ENCODE measurements at regions of chr1 and their contacts with region 1.

Region 1: DNA sequence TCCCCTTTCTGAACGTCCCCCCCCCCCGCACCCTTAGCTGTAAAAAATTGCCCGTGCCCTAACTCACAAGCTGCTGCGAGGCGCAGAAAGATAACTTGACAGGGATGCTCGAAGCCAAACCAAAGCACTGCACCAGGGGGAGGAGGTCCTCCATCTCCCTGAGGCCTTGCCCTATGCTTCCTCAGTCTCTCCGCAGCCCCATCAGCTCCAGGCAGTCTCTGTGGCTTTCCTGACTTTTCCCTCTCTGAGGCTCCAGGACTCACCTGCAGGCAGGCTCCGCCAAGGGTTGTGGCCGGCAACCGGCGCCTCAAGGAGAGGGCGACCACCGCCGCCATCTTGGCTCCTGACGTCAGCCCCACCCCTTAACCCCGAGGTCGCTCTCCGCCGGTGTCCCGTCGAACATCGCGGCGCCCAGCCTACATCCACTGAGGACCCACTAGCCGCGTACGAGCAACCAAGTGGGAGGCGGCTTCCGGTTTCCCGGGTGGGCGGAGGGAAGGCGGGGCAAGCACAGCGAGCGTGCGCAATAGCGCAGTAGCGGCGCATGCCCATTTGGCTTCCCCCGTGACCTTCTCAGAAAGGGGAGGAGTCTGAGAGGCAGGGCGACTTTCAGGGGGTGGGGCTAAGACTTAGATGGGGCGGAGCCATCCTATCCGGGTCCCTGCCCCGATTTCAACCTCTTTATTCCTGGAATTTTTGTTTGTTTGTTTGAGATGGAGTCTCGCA is at the start of gene SDHB:
- DNase-seq: peak; percentile 100
- H3K4me3 Mint-ChIP-seq: peak within 1 kb of the TSS; percentile 99
- H3K27ac Mint-ChIP-seq: peak within 1 kb of the TSS; percentile 98
- H3K4me1 Mint-ChIP-seq: peaks cover 16% of the 10 kb centered on the region
- H3K27me3 Mint-ChIP-seq: peaks cover 6% of the 10 kb centered on the region
- total RNA-seq, gene SDHB: 140 and 156 TPM in 2 replicates

Region 2: DNA sequence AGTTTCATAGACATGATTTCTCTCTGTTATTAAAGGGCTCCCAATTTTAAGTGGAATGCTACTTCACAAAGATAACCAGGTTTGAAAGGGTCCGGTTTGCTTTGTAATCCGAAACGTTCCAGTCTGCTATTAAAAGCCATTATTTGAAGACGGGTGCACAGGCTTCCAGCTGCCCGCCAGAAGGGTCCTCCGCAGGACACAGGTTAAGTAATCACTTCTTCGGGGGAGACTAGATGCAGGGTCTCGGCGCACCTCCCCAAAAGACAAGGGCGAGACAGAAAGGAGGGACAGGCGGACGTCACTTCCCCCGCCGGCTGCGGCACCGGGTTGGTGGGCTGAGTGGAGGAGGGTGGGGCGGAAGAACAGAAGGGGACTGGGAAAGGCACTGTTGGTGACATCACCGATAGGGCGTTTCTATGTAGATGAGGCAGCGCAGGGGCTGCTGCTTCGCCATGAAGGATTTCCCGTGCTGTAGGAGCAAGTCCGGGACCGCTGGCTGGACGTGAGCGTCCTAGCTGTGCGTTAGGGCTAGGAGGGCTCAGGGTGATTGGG is 149.2 kb before region 1 on chr1:
- intact Hi-C with region 1: loop called (anchors 2 kb)
- DNase-seq: peak; percentile 100
- H3K4me3 Mint-ChIP-seq: no peak overlapping the region
- H3K27ac Mint-ChIP-seq: no peak overlapping the region
- H3K4me1 Mint-ChIP-seq: peaks cover 24% of the 10 kb centered on the region
- H3K27me3 Mint-ChIP-seq: peaks cover 1% of the 10 kb centered on the region

Region 3: GRCh38 chr1:17011439-17012307 is 42.2 kb before region 1 on chr1 and contains the start of gene ATP13A2:
- intact Hi-C with region 1: loop called (anchors 1 kb)
- DNase-seq: peak; percentile 96
- H3K4me3 Mint-ChIP-seq: peak within 1 kb of the TSS; percentile 86
- H3K27ac Mint-ChIP-seq: peak within 1 kb of the TSS; percentile 68
- H3K4me1 Mint-ChIP-seq: peaks cover 18% of the 10 kb centered on the region
- H3K27me3 Mint-ChIP-seq: no peaks in the 10 kb centered on the region
- total RNA-seq, gene ATP13A2: 46.9 and 50.2 TPM in 2 replicates